ENCODE measurements at regions of chr4 and their contacts with region 1.

Region 1: DNA sequence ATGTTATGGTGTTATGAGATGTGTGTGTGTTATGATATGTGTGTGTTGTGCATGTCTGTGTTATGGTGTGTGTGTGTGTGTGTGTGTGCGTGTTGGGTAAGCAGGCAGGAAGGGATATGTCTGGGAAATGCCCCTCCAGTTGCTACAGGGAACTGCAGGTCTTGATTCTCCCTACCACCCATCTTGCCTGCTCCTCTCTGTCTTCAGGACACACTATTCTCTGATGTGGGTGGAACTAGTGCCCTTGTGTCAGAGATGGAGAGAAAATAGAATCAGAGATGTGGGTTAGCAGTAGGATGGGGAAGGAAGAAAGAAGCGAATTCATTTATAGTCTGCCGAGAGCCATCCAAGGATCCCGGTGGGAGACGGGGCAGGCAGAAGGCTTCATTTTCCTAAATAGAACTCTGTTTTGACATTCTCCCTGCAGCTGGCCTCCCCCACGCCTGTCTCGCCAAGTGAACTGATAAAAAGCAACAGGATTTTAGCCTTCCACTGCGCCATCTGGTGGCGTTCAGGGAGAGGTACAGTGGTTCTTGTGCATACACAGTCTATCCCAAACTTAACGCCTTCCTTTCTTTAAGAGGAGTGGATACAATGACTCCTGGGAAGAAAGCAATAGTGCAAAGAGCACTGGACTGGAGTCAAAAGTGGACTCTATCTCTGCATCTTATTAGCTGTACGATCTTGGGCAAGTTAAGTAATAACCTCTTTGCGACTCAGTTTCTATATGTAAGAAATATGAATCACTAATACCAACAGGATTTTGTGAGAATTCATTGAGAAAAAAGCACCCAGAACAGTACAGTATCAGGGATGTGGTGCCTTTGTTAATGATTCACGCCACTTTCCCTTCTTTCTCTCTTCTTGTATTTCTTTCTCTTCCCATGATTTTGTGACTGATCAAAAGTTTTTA is 14.1 kb upstream of the MGST2 start:
- DNase-seq: peak; percentile 80 to 90 (median 86)
- H3K4me3 ChIP-seq: peak overlapping the region in 1 of 7 experiments; percentile 56
- H3K27ac ChIP-seq: no peak overlapping the region
- H3K4me1 ChIP-seq: peaks cover 0 to 3% (median 2%) of the 10 kb centered on the region in 4 experiments
- H3K27me3 ChIP-seq: no peaks in the 10 kb centered on the region

Region 2: GRCh38 chr4:139609647-139610046 is 41.9 kb before region 1 on chr4:
- CTCF ChIA-PET with region 1: interaction called, 97 read pairs
- POLR2A ChIA-PET with region 1: no interaction called
- DNase-seq: peak in 1 of 3 donors; percentile 34
- H3K4me3 ChIP-seq: no peak overlapping the region
- H3K27ac ChIP-seq: no peak overlapping the region
- H3K4me1 ChIP-seq: peaks cover 0 to 9% (median 6%) of the 10 kb centered on the region in 4 experiments
- H3K27me3 ChIP-seq: no peaks in the 10 kb centered on the region

Region 3: DNA sequence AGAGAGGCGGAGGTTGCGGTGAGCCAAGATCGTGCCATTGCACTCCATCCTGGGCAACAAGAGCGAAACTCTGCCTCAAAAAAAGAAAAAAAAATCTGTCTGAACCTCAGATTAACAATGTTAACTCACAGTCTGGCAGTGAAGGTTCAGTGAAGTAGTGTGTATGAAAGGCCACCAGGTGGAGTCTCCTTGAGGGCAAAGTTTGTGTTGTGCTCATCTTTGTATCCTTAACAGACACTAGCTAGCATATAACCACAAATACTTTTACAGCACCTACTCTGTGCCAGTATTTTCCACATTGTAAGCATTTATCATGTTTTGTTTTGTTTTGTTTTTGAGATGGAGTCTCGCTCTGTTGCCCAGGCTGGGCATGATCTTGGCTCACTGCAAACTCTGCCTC is 31.9 kb before region 1 on chr4:
- CTCF ChIA-PET with region 1: interaction called, 22 read pairs
- POLR2A ChIA-PET with region 1: no interaction called
- DNase-seq: peak in 2 of 3 donors; percentile 51 to 55
- H3K4me3 ChIP-seq: no peak overlapping the region
- H3K27ac ChIP-seq: no peak overlapping the region
- H3K4me1 ChIP-seq: no peaks in the 10 kb centered on the region
- H3K27me3 ChIP-seq: no peaks in the 10 kb centered on the region

Region 4: DNA sequence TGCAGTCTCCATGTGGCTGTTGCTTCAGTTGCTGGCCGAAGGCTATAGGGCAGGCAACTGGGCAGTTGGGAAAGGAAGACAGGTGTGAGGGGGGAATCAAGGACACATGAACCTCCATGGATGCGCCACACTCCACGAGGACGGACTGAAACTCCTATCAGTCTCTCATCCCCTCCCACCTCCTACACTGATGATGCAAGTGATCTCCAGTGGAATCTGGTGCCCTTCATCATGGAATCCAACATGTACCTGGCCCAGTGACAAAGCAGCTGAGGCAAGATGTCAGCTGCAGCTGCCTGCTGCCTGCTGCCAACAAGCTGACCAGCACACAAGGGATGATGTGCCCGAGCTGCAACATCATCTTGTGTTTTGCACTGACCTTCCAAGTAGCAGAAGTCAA is 11.9 kb before region 1 on chr4:
- CTCF ChIA-PET with region 1: interaction called, 14 read pairs
- POLR2A ChIA-PET with region 1: no interaction called
- DNase-seq: no peak
- H3K4me3 ChIP-seq: no peak overlapping the region
- H3K27ac ChIP-seq: no peak overlapping the region
- H3K4me1 ChIP-seq: no peaks in the 10 kb centered on the region
- H3K27me3 ChIP-seq: no peaks in the 10 kb centered on the region

Region 5: DNA sequence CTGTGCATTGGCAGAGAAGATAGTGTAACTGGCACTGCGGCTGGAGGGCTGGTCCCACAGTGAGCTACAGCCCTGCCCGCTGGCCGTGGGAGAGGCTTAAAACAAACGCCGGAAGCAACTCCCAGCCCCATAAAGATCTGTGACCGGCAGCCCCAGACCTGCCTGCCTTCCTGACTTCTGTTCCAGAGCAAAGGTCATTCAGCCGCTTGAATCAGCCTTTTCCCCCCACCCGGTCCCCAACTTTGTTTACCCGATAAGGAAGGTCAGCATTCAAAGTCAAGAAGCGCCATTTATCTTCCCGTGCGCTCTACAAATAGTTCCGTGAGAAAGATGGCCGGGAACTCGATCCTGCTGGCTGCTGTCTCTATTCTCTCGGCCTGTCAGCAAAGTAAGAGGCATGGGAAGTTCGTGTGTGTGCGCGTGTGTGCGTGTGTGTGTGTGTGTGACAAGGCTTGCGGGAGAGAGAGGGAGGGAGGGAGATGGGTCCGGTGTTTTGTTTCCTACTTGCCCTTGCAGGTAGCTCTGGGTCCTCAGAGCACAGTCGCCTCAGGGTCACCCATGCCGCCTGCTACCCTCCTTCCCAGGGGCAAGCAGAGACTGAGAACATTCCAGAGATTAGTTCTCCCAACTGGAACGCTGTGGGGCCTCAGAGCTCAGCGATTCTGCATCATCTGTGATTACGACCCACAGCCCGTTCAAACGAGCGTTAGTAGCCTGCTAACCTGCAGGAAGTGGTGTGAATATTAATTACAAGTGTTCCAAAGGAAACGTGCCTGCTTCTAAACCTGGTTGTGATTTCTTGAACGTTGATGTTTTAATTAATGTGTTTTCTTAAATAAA is 14.4 kb after region 1 on chr4 and contains the start of gene MGST2:
- CTCF ChIA-PET with region 1: interaction called, 75 read pairs
- POLR2A ChIA-PET with region 1: no interaction called
- DNase-seq: peak; percentile 76 to 77 (median 76)
- H3K4me3 ChIP-seq: peak within 1 kb of the TSS; percentile 52 to 95 (median 86)
- H3K27ac ChIP-seq: peak within 1 kb of the TSS; percentile 71 to 91
- H3K4me1 ChIP-seq: peaks cover 15 to 36% (median 28%) of the 10 kb centered on the region in 4 experiments
- H3K27me3 ChIP-seq: no peaks in the 10 kb centered on the region

Region 6: GRCh38 chr4:139817657-139818452 is 166.3 kb after region 1 on chr4:
- CTCF ChIA-PET with region 1: no interaction called
- POLR2A ChIA-PET with region 1: no interaction called
- DNase-seq: no peak
- H3K4me3 ChIP-seq: no peak overlapping the region
- H3K27ac ChIP-seq: no peak overlapping the region
- H3K4me1 ChIP-seq: peaks cover 0 to 24% (median 17%) of the 10 kb centered on the region in 4 experiments
- H3K27me3 ChIP-seq: no peaks in the 10 kb centered on the region

Measured in common myeloid progenitor, CD34-positive (primary cell).